ENCODE measurements at regions of chr2 and their contacts with region 1.

Region 1: DNA sequence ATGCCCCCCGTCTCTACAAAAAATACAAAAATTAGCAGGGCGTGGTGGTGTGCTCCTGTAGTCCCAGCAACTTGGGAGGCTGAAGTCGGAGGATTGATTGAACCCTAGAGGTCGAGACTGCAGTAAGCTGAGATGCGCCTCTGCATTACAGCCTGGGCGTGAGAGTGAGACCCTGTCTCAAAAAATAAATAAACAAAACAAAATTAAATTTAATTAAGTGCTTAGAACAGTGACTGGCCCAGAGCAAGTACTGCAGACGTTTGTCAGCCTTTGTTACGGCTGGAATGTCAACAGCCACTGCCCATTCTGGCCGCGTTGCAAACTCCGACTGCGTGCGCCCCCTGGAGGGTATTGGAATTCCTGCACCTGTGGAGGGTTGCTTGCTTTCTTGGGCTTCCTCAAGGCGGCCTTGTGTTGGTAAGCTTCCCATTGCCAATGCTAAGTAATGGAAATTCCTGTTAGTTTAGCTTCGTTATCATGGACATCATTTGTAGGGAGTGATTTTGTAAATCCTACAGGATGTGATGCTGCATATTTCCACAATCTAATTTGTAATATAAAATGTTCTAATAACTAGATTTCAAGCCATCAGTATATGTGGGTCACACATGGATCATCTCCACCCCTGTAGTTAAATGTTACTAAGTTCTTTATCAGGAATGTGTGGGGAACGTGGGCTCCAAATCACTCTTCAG is 15.9 kb upstream of the ATP6V1B1 start:
- DNase-seq: peak; percentile 64
- ATAC-seq: peak; percentile 96
- H3K4me3 ChIP-seq: no peak overlapping the region
- H3K27ac ChIP-seq: no peak overlapping the region
- H3K4me1 ChIP-seq: no peaks in the 10 kb centered on the region
- H3K27me3 ChIP-seq: no peaks in the 10 kb centered on the region
- CTCF ChIP-seq: peak; percentile 88
- POLR2A ChIP-seq: no peak
- RAD21 ChIP-seq: peak; percentile 74

Region 2: GRCh38 chr2:70861777-70862625 is 57.8 kb before region 1 on chr2:
- CTCF ChIA-PET with region 1: interaction called, 4 read pairs
- POLR2A ChIA-PET with region 1: no interaction called
- dilution Hi-C with region 1: no loop called
- in situ Hi-C with region 1: no loop called
- intact Hi-C with region 1: loop called (anchors 2 kb)
- DNase-seq: peak; percentile 62
- ATAC-seq: peak; percentile 98
- H3K4me3 ChIP-seq: no peak overlapping the region
- H3K27ac ChIP-seq: no peak overlapping the region
- H3K4me1 ChIP-seq: no peaks in the 10 kb centered on the region
- H3K27me3 ChIP-seq: peaks cover 38% of the 10 kb centered on the region
- CTCF ChIP-seq: peak; percentile 98
- POLR2A ChIP-seq: no peak
- RAD21 ChIP-seq: peak; percentile 87

Region 3: GRCh38 chr2:70871398-70872211 is 48.2 kb before region 1 on chr2:
- CTCF ChIA-PET with region 1: interaction called, 7 read pairs
- POLR2A ChIA-PET with region 1: no interaction called
- dilution Hi-C with region 1: no loop called
- in situ Hi-C with region 1: no loop called
- intact Hi-C with region 1: loop called (anchors 1 kb)
- DNase-seq: peak; percentile 68
- ATAC-seq: peak; percentile 100
- H3K4me3 ChIP-seq: no peak overlapping the region
- H3K27ac ChIP-seq: no peak overlapping the region
- H3K4me1 ChIP-seq: no peaks in the 10 kb centered on the region
- H3K27me3 ChIP-seq: peaks cover 27% of the 10 kb centered on the region
- CTCF ChIP-seq: peak; percentile 94
- POLR2A ChIP-seq: no peak
- RAD21 ChIP-seq: peak; percentile 90